ENCODE measurements at regions of chr21 and their contacts with region 1.

Region 1: GRCh38 chr21:15826147-15826780 is 96.5 kb downstream of the USP25 start:
- DNase-seq: peak; percentile 72
- ATAC-seq: peak; percentile 90
- H3K4me3 ChIP-seq: no peak overlapping the region
- H3K27ac ChIP-seq: no peak overlapping the region
- H3K4me1 ChIP-seq: no peaks in the 10 kb centered on the region
- H3K27me3 ChIP-seq: no peaks in the 10 kb centered on the region
- CTCF ChIP-seq: peak; percentile 75
- EP300 ChIP-seq: no peak
- POLR2A ChIP-seq: no peak
- RAD21 ChIP-seq: peak; percentile 49

Region 2: DNA sequence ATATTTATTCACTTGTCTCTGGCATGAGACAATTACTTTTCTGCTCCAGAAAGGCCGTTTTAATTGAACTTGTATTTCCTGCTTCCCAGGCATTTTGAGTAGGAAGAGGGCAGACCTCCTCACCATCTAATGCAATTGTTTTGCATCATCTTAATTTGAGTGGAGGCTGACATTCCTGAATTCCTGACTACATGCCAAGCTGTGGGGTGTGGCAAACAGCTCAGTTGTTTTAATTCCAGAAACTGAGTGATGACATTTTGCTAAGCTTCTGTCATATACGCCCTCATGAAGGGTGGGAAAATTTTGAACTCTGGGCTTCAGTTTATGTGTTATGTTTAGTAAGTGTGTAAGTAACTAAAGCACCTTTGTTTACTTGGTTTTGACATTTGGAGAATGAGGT is 221.8 kb before region 1 on chr21:
- CTCF ChIA-PET with region 1: no interaction called
- POLR2A ChIA-PET with region 1: no interaction called
- in situ Hi-C with region 1: no loop called
- intact Hi-C with region 1: loop called (anchors 5 kb)
- DNase-seq: no peak
- ATAC-seq: no peak
- H3K4me3 ChIP-seq: no peak overlapping the region
- H3K27ac ChIP-seq: no peak overlapping the region
- H3K4me1 ChIP-seq: no peaks in the 10 kb centered on the region
- H3K27me3 ChIP-seq: no peaks in the 10 kb centered on the region
- CTCF ChIP-seq: no peak
- EP300 ChIP-seq: no peak
- POLR2A ChIP-seq: no peak
- RAD21 ChIP-seq: no peak

Region 3: DNA sequence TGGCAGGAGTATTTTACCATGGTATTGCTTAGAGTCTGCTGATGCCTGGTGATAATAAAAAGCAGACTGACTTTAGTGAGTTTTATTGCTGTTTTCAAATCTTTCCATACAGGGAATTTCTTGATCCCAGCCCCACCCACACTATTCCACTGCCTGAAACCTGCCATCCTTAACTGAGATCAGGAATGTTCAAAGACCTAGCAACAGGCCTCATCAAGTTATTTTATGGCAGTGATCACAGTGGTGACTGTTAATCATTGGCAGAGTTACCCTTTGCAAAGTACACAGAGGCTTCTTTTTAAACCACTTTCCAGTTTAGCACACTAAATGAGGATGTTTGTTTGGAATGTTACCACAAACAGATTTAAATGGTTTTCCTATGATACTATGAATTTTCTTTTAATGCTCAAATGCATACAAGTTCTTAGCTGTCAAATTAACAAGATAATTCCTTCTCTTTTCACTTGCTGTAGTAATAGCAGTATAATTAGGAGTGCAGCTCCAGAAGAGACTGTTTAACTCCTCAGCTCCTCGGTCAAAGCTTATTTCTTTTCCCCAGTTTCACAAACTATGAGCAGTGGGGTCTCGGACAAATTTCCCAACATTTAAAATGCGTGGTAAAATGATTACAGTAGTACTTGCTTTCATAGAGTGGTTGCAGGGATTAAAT is 166.4 kb before region 1 on chr21:
- CTCF ChIA-PET with region 1: no interaction called
- POLR2A ChIA-PET with region 1: no interaction called
- in situ Hi-C with region 1: no loop called
- intact Hi-C with region 1: loop called (anchors 5 kb)
- DNase-seq: peak; percentile 42
- ATAC-seq: peak; percentile 100
- H3K4me3 ChIP-seq: peak overlapping the region in 1 of 3 experiments; percentile 8; a peak in 2 of 6 replicates
- H3K27ac ChIP-seq: no peak overlapping the region
- H3K4me1 ChIP-seq: peaks cover 16% of the 10 kb centered on the region
- H3K27me3 ChIP-seq: no peaks in the 10 kb centered on the region; a peak in 1 of 5 replicates
- CTCF ChIP-seq: no peak
- EP300 ChIP-seq: no peak
- POLR2A ChIP-seq: no peak
- RAD21 ChIP-seq: no peak

Region 4: DNA sequence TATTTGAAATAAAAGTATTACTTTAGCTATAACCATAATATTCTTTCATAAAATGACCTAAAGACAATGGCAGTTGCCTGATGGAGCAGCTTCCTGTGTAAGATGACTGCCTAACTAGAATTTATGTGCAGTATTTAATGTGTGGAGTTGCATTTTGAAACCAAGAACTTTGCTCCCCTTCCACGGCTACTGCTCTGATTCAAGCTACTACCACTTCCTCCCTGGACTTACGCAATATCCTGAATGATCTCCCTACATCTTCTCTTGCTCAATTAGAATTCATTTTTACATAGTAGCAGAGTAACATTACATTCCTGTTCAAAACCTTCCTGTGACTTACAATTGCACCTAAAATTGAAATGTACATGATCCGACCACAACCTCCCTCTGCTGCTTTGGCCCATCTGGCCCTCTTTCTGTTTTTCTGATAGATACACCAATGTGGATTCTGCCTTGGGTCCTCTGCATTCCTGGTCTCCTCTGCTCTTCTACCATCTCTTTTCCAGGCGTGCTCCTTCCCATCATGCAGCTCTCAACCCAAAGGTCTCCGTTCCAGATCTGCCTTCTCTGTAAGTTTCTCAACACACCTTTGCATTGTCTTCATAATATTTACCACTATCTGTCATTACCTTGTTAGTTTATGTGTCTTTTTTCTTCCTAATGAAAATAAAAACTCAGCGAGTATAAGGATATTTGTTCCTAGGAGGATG is 143.9 kb before region 1 on chr21:
- CTCF ChIA-PET with region 1: no interaction called
- POLR2A ChIA-PET with region 1: no interaction called
- in situ Hi-C with region 1: no loop called
- intact Hi-C with region 1: loop called (anchors 5 kb)
- DNase-seq: peak; percentile 49
- ATAC-seq: peak; percentile 74
- H3K4me3 ChIP-seq: peak overlapping the region in 2 of 3 experiments; percentile 25 to 30; a peak in 2 of 6 replicates
- H3K27ac ChIP-seq: no peak overlapping the region
- H3K4me1 ChIP-seq: peaks cover 10% of the 10 kb centered on the region
- H3K27me3 ChIP-seq: no peaks in the 10 kb centered on the region; a peak in 2 of 5 replicates
- CTCF ChIP-seq: no peak
- EP300 ChIP-seq: no peak; a peak in 1 of 4 replicates
- POLR2A ChIP-seq: no peak
- RAD21 ChIP-seq: no peak

Region 5: GRCh38 chr21:15718711-15719110 is 107.6 kb before region 1 on chr21:
- CTCF ChIA-PET with region 1: no interaction called
- POLR2A ChIA-PET with region 1: no interaction called
- in situ Hi-C with region 1: no loop called
- intact Hi-C with region 1: no loop called
- DNase-seq: no peak
- ATAC-seq: no peak
- H3K4me3 ChIP-seq: no peak overlapping the region
- H3K27ac ChIP-seq: no peak overlapping the region
- H3K4me1 ChIP-seq: 0 out of 2 replicates have a peak, but pooled peaks cover 6% of the 10 kb centered on the region
- H3K27me3 ChIP-seq: no peaks in the 10 kb centered on the region
- CTCF ChIP-seq: no peak
- EP300 ChIP-seq: no peak
- POLR2A ChIP-seq: no peak
- RAD21 ChIP-seq: no peak

Region 6: DNA sequence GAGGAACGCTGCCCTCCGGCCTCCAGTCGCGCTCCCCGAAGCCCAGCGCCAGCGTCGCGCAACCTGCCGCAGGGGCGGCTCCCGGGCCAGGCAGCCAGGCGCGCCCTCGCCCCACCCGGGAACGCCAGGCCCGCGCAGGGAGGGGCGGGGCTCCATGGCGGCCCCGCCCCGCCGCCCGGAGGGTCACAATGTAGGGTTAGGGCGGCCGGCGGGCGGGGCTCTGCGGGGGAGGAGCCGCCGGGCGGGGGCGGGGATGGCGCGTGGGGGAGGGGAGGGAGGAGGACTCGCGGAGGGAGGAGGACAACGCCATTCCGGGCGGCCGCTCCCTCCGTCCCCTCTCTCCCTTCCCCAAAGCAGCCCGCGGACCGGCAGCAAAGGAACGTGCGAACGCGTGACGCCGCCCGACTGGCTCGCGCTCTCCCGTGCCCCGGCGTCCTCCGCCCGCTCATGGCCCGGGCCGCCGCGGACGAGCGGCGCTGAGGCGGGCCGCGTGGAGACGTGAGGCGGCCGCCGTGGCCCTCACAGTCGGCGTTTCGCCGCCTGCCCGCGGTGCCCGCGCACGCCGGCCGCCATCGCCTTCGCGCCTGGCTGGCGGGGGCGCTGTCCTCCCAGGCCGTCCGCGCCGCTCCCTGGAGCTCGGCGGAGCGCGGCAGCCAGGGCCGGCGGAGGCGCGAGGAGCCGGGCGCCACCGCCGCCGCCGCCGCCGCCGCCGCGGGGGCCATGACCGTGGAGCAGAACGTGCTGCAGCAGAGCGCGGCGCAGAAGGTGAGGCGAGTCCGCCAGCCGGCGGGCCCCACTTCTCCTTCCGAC is 96.4 kb before region 1 on chr21 and contains the start of gene USP25:
- CTCF ChIA-PET with region 1: interaction called, 4 read pairs
- POLR2A ChIA-PET with region 1: no interaction called
- in situ Hi-C with region 1: no loop called
- intact Hi-C with region 1: loop called (anchors 1 kb)
- DNase-seq: peak; percentile 68
- ATAC-seq: peak; percentile 91
- H3K4me3 ChIP-seq: peak within 1 kb of the TSS; percentile 80 to 93 (median 85)
- H3K27ac ChIP-seq: peak within 1 kb of the TSS; percentile 78
- H3K4me1 ChIP-seq: peaks cover 18% of the 10 kb centered on the region
- H3K27me3 ChIP-seq: peaks cover 0 to 7% of the 10 kb centered on the region in 2 experiments; a peak in 3 of 5 replicates
- CTCF ChIP-seq: peak; percentile 43; the same call in 1 of the 2 replicates
- EP300 ChIP-seq: no peak
- POLR2A ChIP-seq: peak; percentile 78 to 92
- RAD21 ChIP-seq: peak; percentile 71
- total RNA-seq, gene USP25: 26.3 and 34.5 TPM in 2 replicates

Region 7: DNA sequence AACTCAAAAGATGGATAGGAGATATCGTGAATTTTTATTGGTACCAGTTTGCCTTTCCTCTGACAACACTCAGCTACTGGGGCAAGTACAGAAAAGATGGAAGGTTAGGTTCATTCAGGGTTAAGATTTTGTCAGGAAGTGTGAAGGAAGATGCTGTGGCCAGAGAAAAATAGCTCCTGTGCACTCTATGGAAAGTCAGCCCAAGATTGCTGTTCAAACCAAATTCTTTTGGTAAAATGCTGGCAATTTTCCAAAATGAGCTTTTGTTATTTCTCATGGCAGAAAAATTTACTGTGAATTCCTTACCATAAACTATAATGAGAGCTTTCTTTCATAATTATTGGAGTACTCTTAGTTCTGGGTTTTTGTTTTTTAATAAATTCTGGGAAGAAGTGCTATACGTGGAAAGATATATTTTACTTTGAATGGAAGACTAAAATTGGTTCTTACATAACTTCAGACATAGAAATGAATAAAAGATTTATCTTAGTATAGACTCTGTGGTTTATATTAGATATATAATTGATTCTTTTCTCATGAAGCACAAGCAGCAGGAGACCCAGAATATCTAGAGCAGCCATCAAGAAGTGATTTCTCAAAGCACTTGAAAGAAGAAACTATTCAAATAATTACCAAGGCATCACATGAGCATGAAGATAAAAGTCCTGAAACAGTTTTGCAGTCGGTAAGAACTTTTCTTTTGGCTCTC is 15.7 kb after region 1 on chr21:
- CTCF ChIA-PET with region 1: no interaction called
- POLR2A ChIA-PET with region 1: no interaction called
- in situ Hi-C with region 1: no loop called
- intact Hi-C with region 1: no loop called
- DNase-seq: no peak
- ATAC-seq: no peak
- H3K4me3 ChIP-seq: no peak overlapping the region
- H3K27ac ChIP-seq: no peak overlapping the region
- H3K4me1 ChIP-seq: no peaks in the 10 kb centered on the region
- H3K27me3 ChIP-seq: no peaks in the 10 kb centered on the region
- CTCF ChIP-seq: no peak
- EP300 ChIP-seq: no peak
- POLR2A ChIP-seq: no peak
- RAD21 ChIP-seq: no peak